ENCODE measurements at regions of chr7 and their contacts with region 1.

Region 1: GRCh38 chr7:133121175-133121844 is 39.4 kb upstream of the CHCHD3 start:
- DNase-seq: no peak
- H3K4me3 Mint-ChIP-seq: no peak overlapping the region
- H3K27ac Mint-ChIP-seq: no peak overlapping the region
- H3K4me1 Mint-ChIP-seq: no peaks in the 10 kb centered on the region
- H3K27me3 Mint-ChIP-seq: peaks cover 70% of the 10 kb centered on the region
- CTCF ChIP-seq: no peak

Region 2: GRCh38 chr7:132709971-132710567 is 411.2 kb before region 1 on chr7:
- CTCF ChIA-PET with region 1: no interaction called
- POLR2A ChIA-PET with region 1: no interaction called
- intact Hi-C with region 1: loop called (anchors 10 kb)
- DNase-seq: peak; percentile 48
- H3K4me3 Mint-ChIP-seq: no peak overlapping the region
- H3K27ac Mint-ChIP-seq: no peak overlapping the region
- H3K4me1 Mint-ChIP-seq: peaks cover 3% of the 10 kb centered on the region
- H3K27me3 Mint-ChIP-seq: peaks cover 12% of the 10 kb centered on the region
- CTCF ChIP-seq: peak; percentile 50

Region 3: DNA sequence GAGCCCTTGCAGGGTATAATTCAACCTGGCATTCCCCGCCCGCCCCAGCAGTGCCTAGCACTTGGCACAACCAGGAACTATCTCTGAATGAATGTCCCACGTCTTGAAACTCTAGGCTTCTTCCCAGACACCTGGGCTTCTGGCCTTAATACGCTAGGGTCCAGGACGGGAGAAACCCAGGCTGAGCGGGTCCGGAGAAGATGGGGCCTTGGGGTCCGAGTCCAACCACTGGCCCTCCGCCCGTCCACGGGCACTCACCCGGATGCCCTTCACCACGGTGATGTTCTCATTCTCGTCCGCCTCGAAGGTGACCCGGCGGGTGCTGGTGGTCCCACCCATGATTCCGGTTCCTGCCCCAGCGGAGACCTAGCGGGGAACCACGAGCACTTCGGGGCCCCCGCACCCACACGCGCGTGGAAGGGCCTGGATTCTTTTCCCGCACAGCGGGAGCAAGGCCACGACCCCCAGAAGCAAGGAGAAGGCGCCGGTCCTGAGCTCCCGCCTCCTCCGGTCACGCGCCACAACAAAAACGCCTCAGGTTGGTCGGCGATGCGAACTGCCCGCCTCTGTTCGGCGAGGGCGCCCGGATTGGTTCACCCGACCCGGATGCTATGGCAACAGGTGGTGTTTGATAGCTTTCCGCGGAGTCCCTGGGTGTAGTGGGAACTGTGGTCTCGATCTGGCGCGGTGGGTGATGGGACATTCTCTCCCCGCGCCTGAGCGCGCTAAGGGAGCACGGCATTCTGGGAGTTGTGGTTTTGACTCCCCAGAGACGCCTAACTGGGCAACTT is 39.5 kb before region 1 on chr7 and contains the start of gene CHCHD3:
- CTCF ChIA-PET with region 1: no interaction called
- POLR2A ChIA-PET with region 1: no interaction called
- intact Hi-C with region 1: no loop called
- DNase-seq: peak; percentile 99
- H3K4me3 Mint-ChIP-seq: peak within 1 kb of the TSS; percentile 97
- H3K27ac Mint-ChIP-seq: peak within 1 kb of the TSS; percentile 95
- H3K4me1 Mint-ChIP-seq: peaks cover 19% of the 10 kb centered on the region
- H3K27me3 Mint-ChIP-seq: no peaks in the 10 kb centered on the region
- CTCF ChIP-seq: no peak
- total RNA-seq, gene CHCHD3: 102 and 126 TPM in 2 replicates

Region 4: DNA sequence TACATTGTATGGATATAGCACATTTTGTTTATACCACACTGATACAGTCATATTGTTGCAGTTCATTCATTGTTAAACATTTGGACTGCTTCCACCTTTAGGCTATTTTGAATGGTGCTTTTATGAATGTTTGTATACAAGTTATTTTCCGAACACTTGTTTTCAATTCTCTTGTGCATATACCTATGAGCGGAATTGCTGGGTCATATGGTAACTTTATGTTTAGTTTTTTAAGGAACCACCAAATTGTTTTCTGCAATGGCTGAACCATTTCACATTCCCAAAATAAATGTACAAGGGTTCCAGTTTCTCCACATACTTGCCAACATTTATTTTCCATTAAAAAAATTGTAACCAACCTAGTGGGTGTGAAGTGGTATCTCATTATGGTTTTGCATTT is 127.6 kb after region 1 on chr7:
- CTCF ChIA-PET with region 1: no interaction called
- POLR2A ChIA-PET with region 1: no interaction called
- intact Hi-C with region 1: no loop called
- DNase-seq: no peak
- H3K4me3 Mint-ChIP-seq: no peak overlapping the region
- H3K27ac Mint-ChIP-seq: no peak overlapping the region
- H3K4me1 Mint-ChIP-seq: peaks cover under 1% of the 10 kb centered on the region
- H3K27me3 Mint-ChIP-seq: no peaks in the 10 kb centered on the region
- CTCF ChIP-seq: no peak